ENCODE measurements at regions of chr1 and their contacts with region 1.

Region 1: GRCh38 chr1:94463765-94464330 is 45.7 kb downstream of the ABCD3 start:
- DNase-seq: peak; percentile 15
- ATAC-seq: peak; percentile 87
- H3K4me3 ChIP-seq: no peak overlapping the region
- H3K27ac ChIP-seq: no peak overlapping the region
- H3K4me1 ChIP-seq: no peaks in the 10 kb centered on the region; the same call in 1 of the 2 replicates
- H3K27me3 ChIP-seq: no peaks in the 10 kb centered on the region
- CTCF ChIP-seq: peak; percentile 57; the same call in 1 of the 2 replicates

Region 2: GRCh38 chr1:94351485-94351884 is 112.4 kb before region 1 on chr1:
- CTCF ChIA-PET with region 1: no interaction called
- POLR2A ChIA-PET with region 1: no interaction called
- in situ Hi-C with region 1: no loop called
- intact Hi-C with region 1: loop called (anchors 10 kb)
- DNase-seq: no peak
- ATAC-seq: no peak
- H3K4me3 ChIP-seq: no peak overlapping the region
- H3K27ac ChIP-seq: no peak overlapping the region
- H3K4me1 ChIP-seq: no peaks in the 10 kb centered on the region
- H3K27me3 ChIP-seq: no peaks in the 10 kb centered on the region
- CTCF ChIP-seq: no peak

Region 3: GRCh38 chr1:94481473-94481933 is 17.7 kb after region 1 on chr1:
- CTCF ChIA-PET with region 1: no interaction called
- POLR2A ChIA-PET with region 1: no interaction called
- in situ Hi-C with region 1: no loop called
- intact Hi-C with region 1: no loop called
- DNase-seq: peak; percentile 43
- ATAC-seq: peak; percentile 90
- H3K4me3 ChIP-seq: no peak overlapping the region
- H3K27ac ChIP-seq: no peak overlapping the region
- H3K4me1 ChIP-seq: no peaks in the 10 kb centered on the region
- H3K27me3 ChIP-seq: no peaks in the 10 kb centered on the region
- CTCF ChIP-seq: peak; percentile 80

Region 4: GRCh38 chr1:94553323-94553730 is 89.5 kb after region 1 on chr1:
- CTCF ChIA-PET with region 1: no interaction called
- POLR2A ChIA-PET with region 1: no interaction called
- in situ Hi-C with region 1: no loop called
- intact Hi-C with region 1: no loop called
- DNase-seq: no peak
- ATAC-seq: no peak
- H3K4me3 ChIP-seq: no peak overlapping the region
- H3K27ac ChIP-seq: no peak overlapping the region
- H3K4me1 ChIP-seq: no peaks in the 10 kb centered on the region
- H3K27me3 ChIP-seq: no peaks in the 10 kb centered on the region
- CTCF ChIP-seq: no peak